Endothelial cell of umbilical vein (primary cell): ENCODE measurements at regions of chr1 and their contacts with region 1.

Region 1: DNA sequence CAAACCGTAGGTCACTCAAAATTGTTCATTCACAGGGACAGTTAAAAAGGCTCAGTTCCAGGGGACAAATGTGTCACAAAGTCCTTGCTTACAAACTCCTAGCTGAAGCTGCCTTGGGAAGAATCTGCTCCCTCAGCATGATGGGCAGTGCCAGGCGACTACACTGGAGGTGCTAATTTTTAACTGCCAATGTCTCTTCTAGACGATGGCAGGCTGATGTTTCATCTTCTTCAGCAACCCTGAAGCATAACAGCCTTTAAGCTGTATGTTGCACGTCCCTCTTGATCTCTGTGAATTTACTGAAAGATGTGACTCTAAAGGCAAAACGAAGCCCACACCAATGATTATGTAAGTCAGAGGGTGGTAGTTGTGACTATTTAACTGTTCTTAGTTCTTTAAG is 11.3 kb downstream of the COA7 start:
- DNase-seq: no peak
- H3K4me3 ChIP-seq: no peak overlapping the region
- H3K27ac ChIP-seq: no peak overlapping the region
- H3K4me1 ChIP-seq: no peaks in the 10 kb centered on the region
- H3K27me3 ChIP-seq: no peaks in the 10 kb centered on the region
- CTCF ChIP-seq: no peak
- POLR2A ChIP-seq: no peak

Region 2: GRCh38 chr1:52141513-52142219 is 545.2 kb before region 1 on chr1 and contains the start of gene ZFYVE9:
- CTCF ChIA-PET with region 1: no interaction called
- POLR2A ChIA-PET with region 1: no interaction called
- dilution Hi-C with region 1: no loop called
- intact Hi-C with region 1: loop called (anchors 5 kb)
- DNase-seq: peak; percentile 79
- H3K4me3 ChIP-seq: peak within 1 kb of the TSS; percentile 29 to 83 (median 48)
- H3K27ac ChIP-seq: peak within 1 kb of the TSS; percentile 79
- H3K4me1 ChIP-seq: peaks cover 33% of the 10 kb centered on the region
- H3K27me3 ChIP-seq: no peaks in the 10 kb centered on the region
- CTCF ChIP-seq: peak; percentile 65 to 71
- POLR2A ChIP-seq: peak; percentile 45
- total RNA-seq, gene ZFYVE9: 14.8 and 16.8 TPM in 2 replicates

Region 3: DNA sequence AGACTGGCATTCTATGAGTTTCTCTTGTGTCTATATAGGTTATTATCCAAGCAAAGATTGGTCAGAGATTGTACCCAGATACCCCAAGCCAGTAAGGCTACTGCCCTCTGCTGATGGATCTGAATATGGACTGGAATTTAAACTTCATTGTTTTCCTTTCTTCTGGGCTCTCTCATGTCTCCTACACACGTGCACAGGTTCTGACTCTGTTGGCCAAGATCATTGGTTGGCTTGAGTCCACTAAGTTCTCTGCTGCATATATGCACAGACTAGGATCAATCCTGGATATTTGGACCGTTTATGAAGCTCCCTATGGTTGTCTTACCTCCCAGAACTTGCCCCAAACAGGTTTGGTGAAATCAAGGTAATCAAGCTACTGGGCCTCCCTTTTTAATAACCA is 390.5 kb before region 1 on chr1:
- CTCF ChIA-PET with region 1: interaction called, 4 read pairs
- POLR2A ChIA-PET with region 1: no interaction called
- dilution Hi-C with region 1: no loop called
- intact Hi-C with region 1: loop called (anchors 5 kb)
- DNase-seq: peak; percentile 78
- H3K4me3 ChIP-seq: no peak overlapping the region
- H3K27ac ChIP-seq: no peak overlapping the region
- H3K4me1 ChIP-seq: no peaks in the 10 kb centered on the region
- H3K27me3 ChIP-seq: no peaks in the 10 kb centered on the region
- CTCF ChIP-seq: peak; percentile 60 to 65
- POLR2A ChIP-seq: no peak

Region 4: GRCh38 chr1:52404116-52404986 is 282.5 kb before region 1 on chr1 and contains the starts of genes ORC1 and PRPF38A:
- CTCF ChIA-PET with region 1: interaction called, 27 read pairs
- POLR2A ChIA-PET with region 1: no interaction called
- dilution Hi-C with region 1: no loop called
- intact Hi-C with region 1: loop called (anchors 1 kb)
- DNase-seq: peak; percentile 97
- H3K4me3 ChIP-seq: peak within 1 kb of the TSS; percentile 57 to 98 (median 83)
- H3K27ac ChIP-seq: peak within 1 kb of the TSS; percentile 98
- H3K4me1 ChIP-seq: peaks cover 14% of the 10 kb centered on the region
- H3K27me3 ChIP-seq: no peaks in the 10 kb centered on the region
- CTCF ChIP-seq: peak; percentile 60 to 75
- POLR2A ChIP-seq: peak; percentile 82
- total RNA-seq, gene ORC1: 11.0 and 12.0 TPM in 2 replicates
- total RNA-seq, gene PRPF38A: 38.4 and 42.0 TPM in 2 replicates

Region 5: DNA sequence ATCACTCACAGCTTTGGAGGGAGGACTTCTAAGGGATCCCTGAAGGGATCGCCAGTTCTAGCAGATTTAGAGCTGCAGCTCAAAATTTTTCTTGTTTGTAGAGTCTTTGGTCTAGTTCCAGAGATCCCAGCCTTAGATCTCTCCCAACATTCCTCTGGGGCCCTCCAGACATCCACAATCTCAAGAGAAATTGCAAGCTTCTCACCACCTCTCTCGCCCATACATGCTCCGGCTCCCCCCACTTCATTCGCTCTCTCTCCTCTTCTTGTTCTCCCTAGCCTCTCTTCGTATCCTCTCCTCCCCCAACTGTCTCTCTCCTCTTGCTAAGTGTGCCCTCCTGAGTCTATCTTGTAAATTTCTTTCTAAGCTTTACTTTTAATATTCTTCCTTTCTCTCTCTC is 118.9 kb before region 1 on chr1:
- CTCF ChIA-PET with region 1: no interaction called
- POLR2A ChIA-PET with region 1: no interaction called
- dilution Hi-C with region 1: no loop called
- intact Hi-C with region 1: no loop called
- DNase-seq: no peak
- H3K4me3 ChIP-seq: no peak overlapping the region
- H3K27ac ChIP-seq: no peak overlapping the region
- H3K4me1 ChIP-seq: peaks cover 10% of the 10 kb centered on the region
- H3K27me3 ChIP-seq: no peaks in the 10 kb centered on the region
- CTCF ChIP-seq: no peak
- POLR2A ChIP-seq: no peak